ENCODE measurements at regions of chr11 and their contacts with region 1.

Region 1: GRCh38 chr11:78564490-78565467 is 9.9 kb downstream of the NARS2 start:
- DNase-seq: peak; percentile 38 to 66
- H3K4me3 ChIP-seq: no peak overlapping the region
- H3K27ac ChIP-seq: no peak overlapping the region
- H3K4me1 ChIP-seq: peaks cover 7% of the 10 kb centered on the region; the same call in 1 of the 2 replicates
- H3K27me3 ChIP-seq: no peaks in the 10 kb centered on the region
- CTCF ChIP-seq: peak; percentile 97

Region 2: DNA sequence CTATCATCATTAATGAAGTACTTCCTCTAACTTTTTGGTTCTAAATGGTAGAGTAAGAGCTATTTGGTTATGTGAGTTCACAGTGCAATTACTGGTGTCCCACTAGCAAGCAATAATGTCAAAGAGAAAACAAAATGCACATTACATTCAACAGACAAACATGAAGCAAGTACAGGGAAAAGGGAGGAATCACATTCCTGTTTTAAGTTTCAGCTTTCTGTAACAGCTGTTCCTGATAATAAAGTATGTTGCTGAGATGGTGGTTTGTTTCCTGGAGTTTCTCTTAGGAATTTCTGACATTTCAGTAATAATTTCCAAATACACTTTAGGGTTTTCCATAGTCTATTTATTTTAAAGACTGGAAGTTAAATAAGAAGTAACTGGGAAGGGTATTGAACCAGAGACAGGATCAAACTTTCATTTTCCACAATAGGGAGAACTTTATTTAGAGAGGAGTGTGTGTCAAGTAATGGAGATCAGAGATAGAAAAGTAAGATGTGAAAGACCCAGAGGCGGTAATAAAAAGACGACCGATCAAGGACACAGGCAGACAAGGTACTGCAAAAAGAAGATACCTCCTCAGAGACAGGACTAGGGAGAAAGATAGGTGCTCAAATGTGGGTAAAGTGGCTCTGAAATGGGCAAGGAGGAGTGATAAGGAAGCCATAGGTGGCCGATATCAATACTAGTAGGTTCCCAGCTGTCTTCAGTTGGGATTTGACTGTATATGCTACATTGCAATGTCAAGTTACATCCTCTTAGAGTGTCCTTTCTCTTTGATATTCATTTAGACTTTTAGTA is 906.4 kb before region 1 on chr11:
- CTCF ChIA-PET with region 1: no interaction called
- POLR2A ChIA-PET with region 1: interaction called, 10 read pairs
- intact Hi-C with region 1: no loop called
- DNase-seq: no peak
- H3K4me3 ChIP-seq: no peak overlapping the region
- H3K27ac ChIP-seq: no peak overlapping the region
- H3K4me1 ChIP-seq: no peaks in the 10 kb centered on the region
- H3K27me3 ChIP-seq: no peaks in the 10 kb centered on the region
- CTCF ChIP-seq: no peak

Region 3: DNA sequence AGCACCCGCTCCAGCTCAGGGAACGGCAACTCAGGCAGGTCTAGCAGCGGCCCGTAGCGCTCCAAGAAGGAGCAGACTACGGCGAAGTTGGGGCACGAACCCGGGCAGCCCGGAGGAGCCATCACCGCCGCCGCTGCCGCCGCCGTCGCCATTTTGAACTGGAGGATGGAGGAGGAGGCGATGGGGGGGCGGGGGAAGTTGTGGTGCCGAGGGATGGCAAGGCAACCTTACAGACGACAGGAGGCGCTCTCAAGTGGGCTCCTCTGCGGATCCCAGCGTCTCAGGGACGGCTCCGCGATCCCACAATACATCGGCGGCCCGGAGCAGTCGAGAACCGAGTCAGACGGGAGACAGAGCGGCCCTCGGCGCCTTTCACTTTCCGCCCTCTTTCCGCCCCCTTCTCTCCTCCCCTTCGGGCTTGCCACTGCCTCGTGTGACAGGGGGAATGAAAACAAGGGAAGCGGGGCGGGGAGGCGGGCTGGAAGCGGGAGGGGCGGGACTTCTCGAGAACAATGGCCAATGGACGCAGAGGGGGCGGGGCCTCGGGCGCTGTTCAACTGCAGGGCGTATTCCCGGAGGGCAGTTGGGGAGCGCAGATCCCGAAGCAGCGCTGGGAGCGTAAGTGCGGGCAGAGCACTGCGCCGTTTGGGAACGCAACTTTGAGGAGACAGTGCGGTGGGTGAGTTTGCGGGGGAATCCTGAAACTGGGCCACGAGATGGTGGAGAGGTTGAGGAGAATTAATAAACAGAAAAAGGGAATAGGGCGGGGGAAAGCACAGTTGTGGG is 744.0 kb before region 1 on chr11 and contains the starts of genes AAMDC and RSF1:
- CTCF ChIA-PET with region 1: no interaction called
- POLR2A ChIA-PET with region 1: no interaction called
- intact Hi-C with region 1: loop called (anchors 5 kb)
- DNase-seq: peak; percentile 97 to 99
- H3K4me3 ChIP-seq: peak within 1 kb of the TSS; percentile 89
- H3K27ac ChIP-seq: peak within 1 kb of the TSS; percentile 55
- H3K4me1 ChIP-seq: peaks cover 38% of the 10 kb centered on the region
- H3K27me3 ChIP-seq: no peaks in the 10 kb centered on the region
- CTCF ChIP-seq: peak; percentile 85
- total RNA-seq, gene AAMDC: 39.8 and 59.3 TPM in 2 replicates
- total RNA-seq, gene RSF1: 110 and 124 TPM in 2 replicates

Region 4: GRCh38 chr11:78045851-78046485 is 518.8 kb before region 1 on chr11:
- CTCF ChIA-PET with region 1: no interaction called
- POLR2A ChIA-PET with region 1: no interaction called
- intact Hi-C with region 1: loop called (anchors 5 kb)
- DNase-seq: peak; percentile 56 to 93
- H3K4me3 ChIP-seq: peak overlapping the region; percentile 37; the same call in 1 of the 2 replicates
- H3K27ac ChIP-seq: no peak overlapping the region
- H3K4me1 ChIP-seq: peaks cover 10% of the 10 kb centered on the region
- H3K27me3 ChIP-seq: no peaks in the 10 kb centered on the region
- CTCF ChIP-seq: peak; percentile 100

Region 5: GRCh38 chr11:78228467-78228866 is 336.3 kb before region 1 on chr11:
- CTCF ChIA-PET with region 1: interaction called, 11 read pairs
- POLR2A ChIA-PET with region 1: no interaction called
- intact Hi-C with region 1: loop called (anchors 1 kb)
- DNase-seq: peak; percentile 45 to 64
- H3K4me3 ChIP-seq: no peak overlapping the region
- H3K27ac ChIP-seq: no peak overlapping the region
- H3K4me1 ChIP-seq: no peaks in the 10 kb centered on the region
- H3K27me3 ChIP-seq: no peaks in the 10 kb centered on the region
- CTCF ChIP-seq: peak; percentile 86